Activated B cell treated with CpG ODN at 0.5 μM for 24 hours (primary cell): ENCODE measurements at regions of chr18 and their contacts with region 1.

Region 1: GRCh38 chr18:22933206-22933957 is at the start of gene RBBP8:
- DNase-seq: peak; percentile 92
- ATAC-seq: peak; percentile 85
- H3K4me3 Mint-ChIP-seq: peak within 1 kb of the TSS; percentile 94
- H3K27ac Mint-ChIP-seq: peak within 1 kb of the TSS; percentile 96
- H3K4me1 Mint-ChIP-seq: peaks cover 28% of the 10 kb centered on the region
- H3K27me3 Mint-ChIP-seq: no peaks in the 10 kb centered on the region
- CTCF ChIP-seq: no peak
- total RNA-seq, gene RBBP8: 29.1 and 29.3 TPM in 2 replicates

Region 2: GRCh38 chr18:22800551-22800951 is 132.8 kb before region 1 on chr18:
- CTCF ChIA-PET with region 1: interaction called, 9 read pairs
- POLR2A ChIA-PET with region 1: no interaction called
- intact Hi-C with region 1: loop called (anchors 5 kb)
- DNase-seq: no peak
- ATAC-seq: no peak
- H3K4me3 Mint-ChIP-seq: no peak overlapping the region
- H3K27ac Mint-ChIP-seq: no peak overlapping the region
- H3K4me1 Mint-ChIP-seq: no peaks in the 10 kb centered on the region
- H3K27me3 Mint-ChIP-seq: peaks cover 7% of the 10 kb centered on the region
- CTCF ChIP-seq: no peak

Region 3: GRCh38 chr18:22822024-22822423 is 111.4 kb before region 1 on chr18:
- CTCF ChIA-PET with region 1: no interaction called
- POLR2A ChIA-PET with region 1: no interaction called
- intact Hi-C with region 1: no loop called
- DNase-seq: no peak
- ATAC-seq: no peak
- H3K4me3 Mint-ChIP-seq: no peak overlapping the region
- H3K27ac Mint-ChIP-seq: no peak overlapping the region
- H3K4me1 Mint-ChIP-seq: no peaks in the 10 kb centered on the region
- H3K27me3 Mint-ChIP-seq: no peaks in the 10 kb centered on the region
- CTCF ChIP-seq: no peak

Region 4: DNA sequence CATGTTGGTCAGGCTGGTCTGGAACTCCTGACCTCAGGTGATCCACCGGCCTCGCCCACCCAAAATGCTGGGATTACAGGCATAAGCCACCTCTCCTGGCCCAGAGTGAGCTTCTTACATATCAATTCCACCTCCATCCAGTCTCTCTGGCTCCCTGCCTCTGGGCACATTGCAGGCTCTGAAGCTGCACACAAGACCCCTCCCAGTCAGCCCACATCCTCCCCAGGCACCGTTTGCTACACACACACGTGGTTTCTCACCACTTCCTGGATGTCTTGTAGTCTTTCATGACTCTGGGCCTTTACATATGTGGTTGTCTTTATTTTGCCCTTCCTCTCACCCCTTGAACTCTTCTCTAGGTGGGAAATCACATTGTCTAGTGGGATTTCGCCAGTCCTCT is 137.9 kb after region 1 on chr18:
- CTCF ChIA-PET with region 1: no interaction called
- POLR2A ChIA-PET with region 1: no interaction called
- intact Hi-C with region 1: loop called (anchors 10 kb)
- DNase-seq: peak; percentile 26
- ATAC-seq: peak; percentile 95
- H3K4me3 Mint-ChIP-seq: peak overlapping the region; percentile 60
- H3K27ac Mint-ChIP-seq: peak overlapping the region; percentile 72
- H3K4me1 Mint-ChIP-seq: peaks cover 51% of the 10 kb centered on the region
- H3K27me3 Mint-ChIP-seq: no peaks in the 10 kb centered on the region
- CTCF ChIP-seq: no peak

Region 5: DNA sequence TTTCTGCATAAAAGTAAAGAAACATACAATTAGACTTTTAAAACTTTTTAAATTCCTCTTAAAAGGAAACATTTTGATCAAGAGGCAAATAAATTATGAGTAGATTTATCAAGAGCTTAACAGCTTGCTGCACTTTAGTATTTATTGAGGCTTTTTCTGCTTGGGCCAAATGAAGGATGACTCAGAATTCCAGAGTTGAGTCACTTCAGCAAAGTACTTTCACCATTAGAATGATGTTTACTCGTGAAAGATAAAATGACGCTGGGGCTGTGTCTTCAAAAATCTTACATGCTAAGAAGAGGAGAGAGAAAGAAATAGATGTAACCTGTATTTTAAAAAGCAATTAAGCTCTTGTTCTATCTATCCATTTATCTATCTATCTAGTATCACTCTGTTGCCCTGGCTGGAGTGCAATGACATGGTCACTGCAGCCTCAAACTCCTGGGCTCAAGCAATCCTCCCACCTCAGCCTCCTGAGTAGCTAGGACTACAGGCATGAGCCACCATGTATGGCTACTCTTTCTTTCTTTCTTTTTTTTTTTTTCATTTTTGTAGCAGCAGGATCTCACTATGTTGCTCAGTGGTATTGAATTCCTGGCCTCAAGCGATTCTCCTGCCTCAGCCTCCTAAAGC is 444.4 kb after region 1 on chr18:
- CTCF ChIA-PET with region 1: interaction called, 18 read pairs
- POLR2A ChIA-PET with region 1: interaction called, 4 read pairs
- intact Hi-C with region 1: loop called (anchors 1 kb)
- DNase-seq: no peak
- ATAC-seq: peak; percentile 50
- H3K4me3 Mint-ChIP-seq: no peak overlapping the region
- H3K27ac Mint-ChIP-seq: no peak overlapping the region
- H3K4me1 Mint-ChIP-seq: peaks cover 8% of the 10 kb centered on the region
- H3K27me3 Mint-ChIP-seq: no peaks in the 10 kb centered on the region
- CTCF ChIP-seq: no peak

Region 6: GRCh38 chr18:23503038-23503962 is 569.9 kb after region 1 on chr18 and contains the start of gene RMC1:
- CTCF ChIA-PET with region 1: no interaction called
- POLR2A ChIA-PET with region 1: no interaction called
- intact Hi-C with region 1: loop called (anchors 1 kb)
- DNase-seq: peak; percentile 100
- ATAC-seq: peak; percentile 89
- H3K4me3 Mint-ChIP-seq: peak within 1 kb of the TSS; percentile 93
- H3K27ac Mint-ChIP-seq: peak within 1 kb of the TSS; percentile 98
- H3K4me1 Mint-ChIP-seq: peaks cover 75% of the 10 kb centered on the region
- H3K27me3 Mint-ChIP-seq: no peaks in the 10 kb centered on the region
- CTCF ChIP-seq: no peak
- total RNA-seq, gene RMC1: 58.4 and 71.2 TPM in 2 replicates